Activated B cell treated with CpG ODN at 0.5 μM for 24 hours (primary cell): ENCODE measurements at regions of chr11 and their contacts with region 1.

Region 1: DNA sequence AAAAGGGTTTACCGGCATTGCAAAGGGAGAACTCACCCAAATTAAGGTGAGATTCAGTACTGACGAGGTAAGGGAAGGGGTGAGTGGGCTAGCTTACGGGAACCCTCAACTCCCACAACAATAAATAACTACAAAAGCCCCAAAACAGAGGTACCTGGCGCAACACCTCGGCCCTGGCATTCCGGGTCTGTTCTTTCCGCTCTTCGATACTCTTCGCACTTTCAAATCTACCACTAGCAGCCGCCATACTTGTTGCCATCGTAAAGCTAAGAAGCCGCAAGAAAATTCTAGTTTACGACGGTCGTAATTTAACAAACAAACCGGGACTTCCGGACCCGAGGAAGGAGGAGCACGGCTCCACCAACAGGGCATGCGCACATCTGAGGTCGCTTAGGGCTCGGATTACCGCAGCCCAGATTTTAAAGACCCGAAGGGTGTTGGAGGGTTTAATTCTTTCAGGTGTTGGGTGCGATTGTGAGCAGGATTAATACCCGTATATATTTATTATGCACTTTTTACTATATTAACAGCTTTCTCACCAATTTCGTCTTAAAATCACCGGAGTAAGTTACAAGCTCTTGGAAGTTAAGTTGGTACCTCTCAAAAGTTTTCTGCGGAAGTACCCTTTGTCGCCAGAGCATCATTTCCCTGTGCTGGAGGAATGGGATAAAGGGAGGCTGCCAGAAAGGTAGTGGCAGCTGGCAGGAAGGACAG is at the start of gene CWF19L2:
- DNase-seq: peak; percentile 67
- ATAC-seq: peak; percentile 96
- H3K4me3 Mint-ChIP-seq: peak within 1 kb of the TSS; percentile 90
- H3K27ac Mint-ChIP-seq: peak within 1 kb of the TSS; percentile 93
- H3K4me1 Mint-ChIP-seq: peaks cover 25% of the 10 kb centered on the region
- H3K27me3 Mint-ChIP-seq: peaks cover 3% of the 10 kb centered on the region
- CTCF ChIP-seq: no peak
- total RNA-seq, gene CWF19L2: 24.5 and 26.1 TPM in 2 replicates

Region 2: GRCh38 chr11:106021967-106022794 is 1435.5 kb before region 1 on chr11 and contains the start of gene MSANTD4:
- CTCF ChIA-PET with region 1: no interaction called
- POLR2A ChIA-PET with region 1: no interaction called
- intact Hi-C with region 1: loop called (anchors 5 kb)
- DNase-seq: peak; percentile 90
- ATAC-seq: peak; percentile 96
- H3K4me3 Mint-ChIP-seq: peak within 1 kb of the TSS; percentile 98
- H3K27ac Mint-ChIP-seq: peak within 1 kb of the TSS; percentile 92
- H3K4me1 Mint-ChIP-seq: peaks cover 43% of the 10 kb centered on the region
- H3K27me3 Mint-ChIP-seq: peaks cover 2% of the 10 kb centered on the region
- CTCF ChIP-seq: no peak
- total RNA-seq, gene MSANTD4: 17.4 and 18.9 TPM in 2 replicates

Region 3: DNA sequence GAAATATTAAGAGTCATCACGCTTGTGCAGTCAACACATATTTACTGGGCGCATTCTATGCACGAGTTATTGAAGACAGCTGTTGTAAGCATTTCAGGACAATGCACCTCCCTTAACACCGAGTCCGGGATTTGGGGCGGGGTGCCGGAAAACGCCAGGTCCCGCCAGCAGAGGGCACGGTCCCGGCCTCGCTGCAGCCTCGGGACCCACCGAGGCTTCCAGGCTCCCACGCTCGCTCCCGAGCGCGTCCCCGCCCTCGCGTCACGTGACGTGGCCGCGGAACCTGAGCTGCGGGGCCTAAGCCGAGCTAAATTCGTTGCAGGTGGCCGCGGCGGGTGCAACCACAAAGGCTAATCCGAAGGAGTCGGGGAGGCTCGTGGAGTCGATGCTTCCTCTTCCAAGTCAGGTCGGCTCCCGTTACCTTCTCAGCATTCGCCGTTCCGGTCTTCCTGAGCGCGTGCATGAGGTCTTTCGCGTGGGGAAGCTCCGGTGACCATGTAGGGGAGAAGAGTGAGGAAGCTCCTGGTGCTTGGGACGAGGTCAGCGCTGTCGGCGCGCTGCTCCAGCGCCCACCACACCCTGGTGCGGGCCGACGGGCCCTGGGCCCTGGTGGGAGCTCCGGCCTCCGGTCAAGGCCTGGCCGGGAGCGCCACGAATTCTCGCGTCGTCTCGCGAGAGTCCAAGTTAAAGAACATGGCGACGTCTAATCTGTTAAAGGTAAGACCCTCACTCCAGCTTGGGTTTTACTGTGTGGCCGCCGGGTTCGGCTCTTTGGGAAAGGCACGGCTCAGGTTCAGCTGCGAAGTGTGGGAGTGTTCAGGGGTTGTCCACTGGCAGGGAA is 551.2 kb after region 1 on chr11 and contains the start of gene CUL5:
- CTCF ChIA-PET with region 1: interaction called, 4 read pairs
- POLR2A ChIA-PET with region 1: interaction called, 3 read pairs
- intact Hi-C with region 1: loop called (anchors 2 kb)
- DNase-seq: peak; percentile 89
- ATAC-seq: peak; percentile 87
- H3K4me3 Mint-ChIP-seq: peak within 1 kb of the TSS; percentile 99
- H3K27ac Mint-ChIP-seq: peak within 1 kb of the TSS; percentile 96
- H3K4me1 Mint-ChIP-seq: peaks cover 10% of the 10 kb centered on the region
- H3K27me3 Mint-ChIP-seq: no peaks in the 10 kb centered on the region
- CTCF ChIP-seq: no peak
- total RNA-seq, gene CUL5: 38.4 and 42.0 TPM in 2 replicates

Region 4: DNA sequence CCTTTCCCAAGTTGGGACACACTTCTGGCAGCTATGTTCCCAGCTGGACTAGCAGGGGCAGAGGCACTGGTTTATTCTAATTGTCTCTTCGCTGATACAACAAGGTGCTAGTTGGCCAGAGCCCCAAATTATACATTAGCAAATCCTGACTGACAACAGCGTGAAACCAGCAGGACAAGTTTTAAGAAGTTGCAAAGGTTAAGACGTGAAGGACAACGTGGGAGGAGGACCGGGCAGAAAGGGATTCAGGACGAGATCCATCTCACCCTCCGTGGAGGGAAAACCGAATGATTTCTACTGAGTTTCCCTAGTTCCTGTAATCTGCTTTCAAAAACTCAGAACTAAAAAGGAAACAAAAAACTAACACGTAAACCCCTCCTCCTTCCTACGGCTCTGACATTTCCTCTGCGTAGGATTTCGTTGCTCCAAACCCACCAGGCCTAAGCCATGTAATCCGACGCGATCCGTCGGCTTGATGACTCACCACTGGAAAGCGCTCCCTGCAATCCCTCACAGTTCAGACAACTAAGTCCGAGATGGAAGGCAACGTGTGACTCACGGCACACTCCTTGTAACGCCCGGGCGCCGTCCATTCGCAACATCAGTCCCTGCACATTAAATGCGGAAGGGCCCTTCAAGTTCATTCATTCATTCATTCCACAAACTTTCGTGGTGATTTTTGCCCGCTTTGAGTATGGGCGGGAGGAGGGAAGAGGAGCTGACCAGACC is 1039.8 kb after region 1 on chr11:
- CTCF ChIA-PET with region 1: no interaction called
- POLR2A ChIA-PET with region 1: no interaction called
- intact Hi-C with region 1: loop called (anchors 10 kb)
- DNase-seq: peak; percentile 51
- ATAC-seq: peak; percentile 71
- H3K4me3 Mint-ChIP-seq: peak overlapping the region; percentile 100
- H3K27ac Mint-ChIP-seq: peak overlapping the region; percentile 97
- H3K4me1 Mint-ChIP-seq: peaks cover 15% of the 10 kb centered on the region
- H3K27me3 Mint-ChIP-seq: no peaks in the 10 kb centered on the region
- CTCF ChIP-seq: no peak